Activated CD4-positive, alpha-beta T cell treated with anti-CD3 and anti-CD28 coated beads, Interleukin-2, amount 10 ng/mL, durations not matched to agents 7 days and 5 days (primary cell): ENCODE measurements at regions of chr20 and their contacts with region 1.

Region 1: GRCh38 chr20:57596998-57597939 is 23.0 kb downstream of the ZBP1 start:
- DNase-seq: peak; percentile 69
- H3K4me3 Mint-ChIP-seq: no peak overlapping the region
- H3K27ac Mint-ChIP-seq: peak overlapping the region; percentile 1
- H3K4me1 Mint-ChIP-seq: peaks cover 21% of the 10 kb centered on the region
- H3K27me3 Mint-ChIP-seq: peaks cover 15% of the 10 kb centered on the region

Region 2: GRCh38 chr20:57540890-57541580 is 56.2 kb before region 1 on chr20:
- CTCF ChIA-PET with region 1: no interaction called
- POLR2A ChIA-PET with region 1: no interaction called
- DNase-seq: no peak
- H3K4me3 Mint-ChIP-seq: no peak overlapping the region
- H3K27ac Mint-ChIP-seq: no peak overlapping the region
- H3K4me1 Mint-ChIP-seq: no peaks in the 10 kb centered on the region
- H3K27me3 Mint-ChIP-seq: peaks cover 33% of the 10 kb centered on the region

Region 3: DNA sequence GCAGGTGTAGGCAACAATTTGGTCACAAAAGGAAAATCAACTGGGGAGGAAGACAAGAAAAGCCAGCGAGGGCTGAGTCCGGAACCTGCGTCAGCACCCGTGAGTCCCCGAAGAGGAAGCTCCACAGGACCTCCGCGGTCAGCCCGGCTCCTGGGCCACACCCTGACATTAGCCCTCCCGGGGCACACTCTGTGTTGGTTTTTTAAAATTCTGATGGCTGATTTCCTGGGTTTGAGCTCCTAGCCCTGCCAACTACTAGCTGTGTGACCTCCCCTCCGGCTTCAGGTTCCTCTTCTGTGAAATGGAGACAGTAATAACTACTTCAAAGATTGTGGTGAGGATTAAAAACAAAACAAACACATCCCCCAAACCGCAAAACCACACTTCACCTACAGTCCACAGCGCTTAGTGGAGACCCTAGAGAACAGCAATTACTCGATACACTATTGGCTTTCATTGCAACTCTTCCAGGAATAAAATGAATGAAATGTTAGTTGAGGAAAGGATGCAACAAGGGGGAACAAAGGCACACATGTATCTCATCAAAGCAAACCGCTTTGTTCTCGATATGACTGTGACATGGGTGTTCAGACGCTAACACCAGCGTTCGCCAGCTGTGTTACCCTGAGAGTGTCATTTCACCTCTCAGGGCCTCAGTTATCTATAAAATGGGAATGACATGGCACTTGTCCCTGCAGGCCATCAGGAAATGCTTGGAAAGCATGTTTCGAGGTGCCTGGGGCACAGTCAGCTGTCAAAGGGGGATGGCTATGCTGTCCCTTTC is 22.0 kb after region 1 on chr20:
- CTCF ChIA-PET with region 1: interaction called, 16 read pairs
- POLR2A ChIA-PET with region 1: no interaction called
- DNase-seq: peak; percentile 88
- H3K4me3 Mint-ChIP-seq: peak overlapping the region; percentile 73
- H3K27ac Mint-ChIP-seq: peak overlapping the region; percentile 94
- H3K4me1 Mint-ChIP-seq: peaks cover 61% of the 10 kb centered on the region
- H3K27me3 Mint-ChIP-seq: peaks cover 2% of the 10 kb centered on the region